ENCODE measurements at regions of chr11 and their contacts with region 1.

Region 1: GRCh38 chr11:63592975-63593395 is 21.2 kb downstream of the PLAAT3 start:
- DNase-seq: no peak
- H3K4me3 ChIP-seq: no peak overlapping the region
- H3K27ac ChIP-seq: no peak overlapping the region
- H3K4me1 ChIP-seq: no peaks in the 10 kb centered on the region
- H3K27me3 ChIP-seq: no peaks in the 10 kb centered on the region
- CTCF ChIP-seq: peak; percentile 90 to 97

Region 2: GRCh38 chr11:62958547-62959421 is 634.2 kb before region 1 on chr11:
- CTCF ChIA-PET with region 1: no interaction called
- dilution Hi-C with region 1: no loop called
- in situ Hi-C with region 1: no loop called
- intact Hi-C with region 1: no loop called
- DNase-seq: no peak
- H3K4me3 ChIP-seq: no peak overlapping the region
- H3K27ac ChIP-seq: no peak overlapping the region
- H3K4me1 ChIP-seq: no peaks in the 10 kb centered on the region
- H3K27me3 ChIP-seq: no peaks in the 10 kb centered on the region
- CTCF ChIP-seq: no peak

Region 3: GRCh38 chr11:62999649-63000048 is 593.3 kb before region 1 on chr11:
- CTCF ChIA-PET with region 1: no interaction called
- dilution Hi-C with region 1: loop called (anchors 10 kb)
- in situ Hi-C with region 1: no loop called
- intact Hi-C with region 1: no loop called
- DNase-seq: peak; percentile 33
- H3K4me3 ChIP-seq: no peak overlapping the region
- H3K27ac ChIP-seq: no peak overlapping the region
- H3K4me1 ChIP-seq: no peaks in the 10 kb centered on the region
- H3K27me3 ChIP-seq: no peaks in the 10 kb centered on the region
- CTCF ChIP-seq: no peak

Region 4: GRCh38 chr11:63337070-63337469 is 255.9 kb before region 1 on chr11:
- CTCF ChIA-PET with region 1: no interaction called
- dilution Hi-C with region 1: no loop called
- in situ Hi-C with region 1: no loop called
- intact Hi-C with region 1: no loop called
- DNase-seq: no peak
- H3K4me3 ChIP-seq: no peak overlapping the region
- H3K27ac ChIP-seq: no peak overlapping the region
- H3K4me1 ChIP-seq: no peaks in the 10 kb centered on the region
- H3K27me3 ChIP-seq: no peaks in the 10 kb centered on the region
- CTCF ChIP-seq: no peak

Region 5: GRCh38 chr11:63478896-63479295 is 114.1 kb before region 1 on chr11:
- CTCF ChIA-PET with region 1: no interaction called
- dilution Hi-C with region 1: no loop called
- in situ Hi-C with region 1: no loop called
- intact Hi-C with region 1: loop called (anchors 1 kb)
- DNase-seq: peak; percentile 44
- H3K4me3 ChIP-seq: no peak overlapping the region
- H3K27ac ChIP-seq: no peak overlapping the region
- H3K4me1 ChIP-seq: peaks cover 3% of the 10 kb centered on the region
- H3K27me3 ChIP-seq: no peaks in the 10 kb centered on the region
- CTCF ChIP-seq: peak; percentile 90 to 96

Region 6: DNA sequence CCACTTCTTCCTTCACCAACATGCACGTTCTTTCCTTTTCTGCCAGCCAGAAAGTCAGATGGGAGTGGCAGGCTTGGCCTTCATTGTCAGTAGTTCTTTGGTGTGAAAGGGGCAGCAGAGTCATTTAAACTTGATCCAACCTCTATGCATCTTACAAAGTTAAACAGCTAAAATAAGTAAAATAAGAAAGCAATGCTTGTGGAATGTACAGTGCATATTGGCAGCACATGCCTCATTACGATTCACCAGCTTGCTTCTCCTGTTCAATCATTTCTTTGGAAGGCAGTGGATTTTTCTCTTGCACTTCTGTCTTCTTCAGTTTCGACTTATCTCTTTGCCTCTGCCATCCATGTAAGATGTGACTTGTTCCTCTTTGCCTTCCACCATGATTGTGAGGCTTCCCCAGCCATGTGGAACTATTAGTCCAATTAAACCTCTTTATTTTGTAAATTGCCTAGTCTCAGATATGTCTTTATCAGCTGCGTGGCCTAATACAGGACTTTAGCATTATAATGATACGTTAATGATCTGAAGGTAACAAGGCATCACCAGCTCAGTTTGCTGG is 72.3 kb before region 1 on chr11:
- CTCF ChIA-PET with region 1: interaction called, 3 read pairs
- dilution Hi-C with region 1: loop called (anchors 5 kb)
- in situ Hi-C with region 1: no loop called
- intact Hi-C with region 1: no loop called
- DNase-seq: no peak
- H3K4me3 ChIP-seq: no peak overlapping the region
- H3K27ac ChIP-seq: no peak overlapping the region
- H3K4me1 ChIP-seq: no peaks in the 10 kb centered on the region
- H3K27me3 ChIP-seq: no peaks in the 10 kb centered on the region
- CTCF ChIP-seq: no peak

Region 7: DNA sequence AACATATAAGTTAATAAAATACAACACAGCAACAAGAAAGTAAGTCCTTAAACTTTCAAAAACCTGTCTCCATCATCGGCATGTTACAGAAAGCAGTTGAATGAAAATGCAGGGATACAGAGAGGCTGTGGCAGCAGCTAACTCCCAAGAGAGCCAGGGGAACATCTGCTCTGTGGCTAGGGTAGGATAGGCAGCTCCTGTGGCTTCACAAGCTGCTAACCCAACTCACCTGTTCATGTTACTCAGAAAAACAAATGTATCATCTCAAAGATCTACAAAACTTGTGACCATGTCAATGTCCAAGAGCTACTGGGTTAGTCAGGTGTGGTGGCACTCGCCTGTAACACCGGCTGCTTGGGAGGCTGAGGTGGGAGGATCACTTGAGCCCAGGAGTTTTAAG is 36.4 kb after region 1 on chr11:
- CTCF ChIA-PET with region 1: no interaction called
- dilution Hi-C with region 1: loop called (anchors 5 kb)
- in situ Hi-C with region 1: no loop called
- intact Hi-C with region 1: no loop called
- DNase-seq: no peak
- H3K4me3 ChIP-seq: no peak overlapping the region
- H3K27ac ChIP-seq: no peak overlapping the region
- H3K4me1 ChIP-seq: no peaks in the 10 kb centered on the region
- H3K27me3 ChIP-seq: no peaks in the 10 kb centered on the region
- CTCF ChIP-seq: no peak

Region 8: DNA sequence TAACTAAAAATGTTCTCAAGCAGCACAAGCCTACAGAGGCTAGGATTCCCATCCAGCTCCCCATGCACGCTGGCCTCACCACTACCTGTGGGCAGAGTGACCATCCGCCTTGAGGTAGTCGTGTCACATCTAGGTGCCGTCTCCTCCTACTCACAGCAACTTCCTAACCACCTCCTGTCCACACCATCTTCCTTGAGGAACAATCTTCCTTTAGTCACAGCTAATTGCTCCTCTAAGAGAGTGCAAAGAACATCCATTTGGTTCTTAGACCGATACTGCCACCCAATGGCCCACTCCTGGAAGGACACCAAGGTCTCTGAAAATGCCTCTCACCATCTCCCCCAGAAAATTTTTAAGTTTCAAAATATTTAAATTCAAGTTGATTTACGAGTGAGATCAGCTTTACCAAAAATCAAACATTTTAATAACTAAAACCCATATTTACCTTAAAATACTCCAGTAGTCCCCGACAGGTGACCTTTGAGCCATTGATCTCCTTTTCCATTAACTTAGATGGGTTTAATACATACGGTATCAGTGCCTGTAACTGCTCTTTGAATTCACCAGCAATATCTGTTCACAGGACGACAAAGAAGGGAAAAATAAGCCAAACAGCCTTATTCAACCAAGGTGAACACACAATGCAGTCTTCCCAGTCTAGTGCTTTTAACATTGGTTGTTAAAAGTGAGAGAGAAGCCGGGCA is 42.9 kb after region 1 on chr11:
- CTCF ChIA-PET with region 1: no interaction called
- dilution Hi-C with region 1: no loop called
- in situ Hi-C with region 1: no loop called
- intact Hi-C with region 1: loop called (anchors 1 kb)
- DNase-seq: peak; percentile 37
- H3K4me3 ChIP-seq: no peak overlapping the region
- H3K27ac ChIP-seq: no peak overlapping the region
- H3K4me1 ChIP-seq: no peaks in the 10 kb centered on the region
- H3K27me3 ChIP-seq: no peaks in the 10 kb centered on the region
- CTCF ChIP-seq: peak; percentile 62 to 79

Region 9: DNA sequence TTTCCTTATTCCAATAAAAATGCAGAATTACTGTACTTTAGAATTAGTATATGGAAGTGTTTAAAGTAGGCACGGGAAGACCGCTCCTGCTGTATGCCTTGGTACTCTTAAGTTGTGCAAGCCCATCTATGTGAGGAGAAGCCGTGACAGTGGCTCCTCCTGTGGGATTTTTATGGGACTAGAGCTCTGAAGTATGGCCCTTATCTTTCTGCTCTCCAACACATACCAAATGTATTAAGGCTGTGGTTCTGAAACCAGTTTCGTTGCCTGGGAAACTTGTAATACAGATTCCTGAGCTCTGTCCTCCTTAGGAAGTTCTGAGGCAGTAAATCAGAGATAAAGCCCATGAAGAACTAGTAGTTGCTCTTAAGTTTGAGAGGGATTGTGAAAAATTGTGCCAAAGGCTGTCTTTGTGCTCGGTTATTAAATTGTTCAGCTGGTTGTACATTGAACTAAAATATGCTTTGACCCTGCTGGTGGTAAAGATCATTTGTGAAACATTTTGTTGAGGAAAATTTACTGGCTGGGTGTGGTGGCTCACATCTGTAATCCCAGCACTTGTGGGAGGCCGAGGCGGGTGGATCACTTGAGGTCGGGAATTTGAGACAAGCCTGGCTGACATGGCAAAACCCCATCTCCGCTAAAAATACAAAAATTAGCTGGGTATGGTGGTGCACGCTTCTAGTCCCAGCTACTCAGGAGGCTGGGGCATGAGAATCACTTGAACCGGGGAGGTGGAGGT is 117.7 kb after region 1 on chr11:
- CTCF ChIA-PET with region 1: no interaction called
- dilution Hi-C with region 1: no loop called
- in situ Hi-C with region 1: no loop called
- intact Hi-C with region 1: no loop called
- DNase-seq: no peak
- H3K4me3 ChIP-seq: no peak overlapping the region
- H3K27ac ChIP-seq: no peak overlapping the region
- H3K4me1 ChIP-seq: no peaks in the 10 kb centered on the region
- H3K27me3 ChIP-seq: no peaks in the 10 kb centered on the region
- CTCF ChIP-seq: no peak

Region 10: DNA sequence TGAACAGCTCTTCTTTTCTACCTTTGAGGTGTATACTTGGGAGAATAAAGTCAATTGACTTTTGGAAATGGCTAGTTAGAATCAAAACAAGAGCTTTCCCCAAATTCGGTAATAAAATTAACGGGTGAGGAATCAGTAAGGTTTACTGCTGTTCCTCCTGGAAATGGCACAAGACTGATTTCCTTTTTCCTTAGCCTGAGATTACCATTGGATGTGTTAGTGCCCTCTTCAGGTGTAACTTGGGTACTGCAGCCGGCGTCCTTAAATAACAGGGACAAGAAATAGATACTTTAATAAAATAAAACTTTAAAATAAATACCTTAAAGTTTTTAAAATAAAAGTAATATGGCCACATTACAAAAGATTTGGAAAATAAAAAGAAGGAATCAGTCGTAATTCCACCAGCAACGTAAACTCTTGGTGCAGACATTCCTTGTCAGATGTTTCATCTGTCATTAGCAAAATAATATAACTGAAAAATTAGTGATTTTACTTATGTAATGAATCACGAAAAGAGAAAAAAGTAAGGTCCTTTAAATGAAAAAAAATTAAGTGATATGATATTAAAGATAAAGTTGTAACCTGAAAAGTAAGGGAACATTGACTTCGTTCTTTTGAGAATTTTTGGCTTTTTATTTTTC is 145.9 kb after region 1 on chr11:
- CTCF ChIA-PET with region 1: no interaction called
- dilution Hi-C with region 1: loop called (anchors 10 kb)
- in situ Hi-C with region 1: no loop called
- intact Hi-C with region 1: loop called (anchors 1 kb)
- DNase-seq: peak; percentile 58
- H3K4me3 ChIP-seq: no peak overlapping the region
- H3K27ac ChIP-seq: no peak overlapping the region
- H3K4me1 ChIP-seq: peaks cover 4% of the 10 kb centered on the region
- H3K27me3 ChIP-seq: no peaks in the 10 kb centered on the region
- CTCF ChIP-seq: peak; percentile 89 to 97

Region 11: GRCh38 chr11:64409707-64410403 is 816.9 kb after region 1 on chr11:
- CTCF ChIA-PET with region 1: no interaction called
- dilution Hi-C with region 1: no loop called
- in situ Hi-C with region 1: no loop called
- intact Hi-C with region 1: no loop called
- DNase-seq: no peak
- H3K4me3 ChIP-seq: no peak overlapping the region
- H3K27ac ChIP-seq: no peak overlapping the region
- H3K4me1 ChIP-seq: no peaks in the 10 kb centered on the region
- H3K27me3 ChIP-seq: peaks cover 3% of the 10 kb centered on the region
- CTCF ChIP-seq: no peak